ENCODE measurements at regions of chr15 and their contacts with region 1.

Region 1: GRCh38 chr15:67319961-67320360 is 65.4 kb downstream of the IQCH start:
- DNase-seq: no peak
- H3K4me3 ChIP-seq: no peak overlapping the region
- H3K27ac ChIP-seq: no peak overlapping the region
- H3K4me1 ChIP-seq: no peaks in the 10 kb centered on the region
- H3K27me3 ChIP-seq: no peaks in the 10 kb centered on the region
- CTCF ChIP-seq: no peak
- EP300 ChIP-seq: no peak
- POLR2A ChIP-seq: no peak

Region 2: DNA sequence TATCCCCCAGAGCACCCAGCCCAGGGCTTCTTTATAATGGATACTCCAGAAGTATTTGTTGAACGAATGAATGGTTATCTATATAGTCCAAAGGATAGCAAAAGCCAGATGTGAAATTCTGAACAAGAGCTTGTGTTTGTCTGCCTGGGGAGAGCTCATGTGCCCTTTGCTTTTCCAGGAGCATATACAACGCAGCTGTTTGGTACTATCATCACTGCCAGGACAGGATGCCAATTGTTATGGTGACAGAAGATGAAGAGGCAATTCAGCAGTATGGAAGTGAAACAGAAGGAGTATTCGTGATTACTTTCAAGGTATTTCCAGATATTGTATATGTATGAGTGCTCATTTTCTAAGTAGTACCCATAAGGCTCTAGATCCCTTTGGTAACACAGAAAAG is 1011.4 kb before region 1 on chr15:
- in situ Hi-C with region 1: no loop called
- intact Hi-C with region 1: no loop called
- DNase-seq: no peak
- H3K4me3 ChIP-seq: no peak overlapping the region
- H3K27ac ChIP-seq: no peak overlapping the region
- H3K4me1 ChIP-seq: peaks cover 0 to 14% (median 7%) of the 10 kb centered on the region in 4 donors
- H3K27me3 ChIP-seq: no peaks in the 10 kb centered on the region
- CTCF ChIP-seq: no peak
- EP300 ChIP-seq: no peak
- POLR2A ChIP-seq: no peak

Region 3: GRCh38 chr15:67196672-67197363 is 123.1 kb before region 1 on chr15:
- in situ Hi-C with region 1: no loop called
- intact Hi-C with region 1: no loop called
- DNase-seq: no peak
- H3K4me3 ChIP-seq: no peak overlapping the region
- H3K27ac ChIP-seq: peak overlapping the region in 2 of 4 donors; percentile 22 to 49
- H3K4me1 ChIP-seq: peaks cover 0 to 7% (median 3%) of the 10 kb centered on the region in 4 donors
- H3K27me3 ChIP-seq: no peaks in the 10 kb centered on the region
- CTCF ChIP-seq: no peak
- EP300 ChIP-seq: no peak
- POLR2A ChIP-seq: no peak

Region 4: DNA sequence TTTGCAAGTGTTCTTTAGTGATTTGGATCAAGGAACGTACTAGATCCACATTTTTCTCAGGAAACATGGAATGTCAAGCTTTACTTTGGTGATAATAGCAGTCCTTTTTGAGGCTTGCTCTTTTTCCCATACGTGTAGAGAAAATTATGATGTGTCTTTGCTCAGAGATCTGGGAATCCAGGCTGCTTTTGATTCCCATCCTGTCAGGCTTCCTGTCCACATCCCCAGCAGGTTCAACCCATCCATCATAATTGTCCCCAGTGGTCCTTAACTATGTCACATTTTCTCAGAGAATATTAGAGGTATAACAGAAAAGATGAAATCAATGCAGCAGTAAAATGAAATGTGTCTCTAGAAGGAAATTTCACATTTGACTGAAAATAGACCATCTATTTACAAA is 46.0 kb after region 1 on chr15:
- in situ Hi-C with region 1: no loop called
- intact Hi-C with region 1: loop called (anchors 1 kb)
- DNase-seq: no peak
- H3K4me3 ChIP-seq: no peak overlapping the region
- H3K27ac ChIP-seq: no peak overlapping the region
- H3K4me1 ChIP-seq: no peaks in the 10 kb centered on the region
- H3K27me3 ChIP-seq: no peaks in the 10 kb centered on the region
- CTCF ChIP-seq: no peak
- EP300 ChIP-seq: no peak
- POLR2A ChIP-seq: no peak

Measured in transverse colon (tissue), 4 donors.